ENCODE measurements at regions of chr4 and their contacts with region 1.

Region 1: DNA sequence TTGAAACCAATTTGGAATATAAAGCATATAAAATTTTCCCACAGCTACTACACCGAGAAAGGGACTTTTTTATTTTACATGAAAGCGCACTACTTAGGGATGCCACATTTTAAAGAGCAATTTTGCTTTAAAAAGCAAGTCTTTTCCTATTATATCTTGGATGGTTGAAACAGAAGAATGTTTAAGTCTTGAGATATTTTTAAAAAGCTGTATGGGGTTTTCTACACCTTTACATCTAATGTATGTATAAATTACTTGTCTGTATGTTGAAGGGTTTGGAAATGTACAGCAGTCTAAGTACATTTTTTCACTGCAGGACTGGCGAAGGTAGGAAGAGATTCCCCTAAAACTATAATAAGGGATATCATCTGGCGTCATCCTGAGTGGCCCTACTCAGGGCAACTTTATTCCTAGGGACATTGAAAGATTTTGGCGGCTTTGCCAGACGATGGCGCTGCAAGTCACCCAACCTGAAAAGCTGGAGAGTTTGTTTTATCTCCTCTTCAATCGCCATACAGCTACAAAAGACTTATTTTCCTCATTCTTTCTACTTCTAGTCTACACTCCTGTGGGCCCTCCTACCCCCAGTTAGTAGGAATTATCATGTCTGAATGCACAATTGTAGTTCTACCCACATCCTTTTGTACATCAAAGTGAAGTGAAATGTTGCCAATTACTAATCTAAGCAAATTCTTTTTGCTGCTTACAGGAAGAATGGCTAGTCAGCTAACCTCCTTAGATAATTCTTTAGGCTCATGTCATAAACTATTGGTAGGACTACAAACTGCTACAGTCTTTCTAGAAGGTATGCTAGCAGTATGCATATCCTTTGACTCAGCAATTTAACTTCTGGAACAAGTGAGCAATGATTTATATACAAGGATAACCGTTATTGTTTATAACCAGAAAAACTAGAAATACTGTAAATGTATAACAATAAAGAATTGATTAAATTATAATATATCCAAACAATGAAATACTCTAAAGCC is 782 bp upstream of the NEK1 start:
- DNase-seq: peak; percentile 51 to 88 (median 77)
- ATAC-seq: peak; percentile 43
- H3K4me3 ChIP-seq: peak overlapping the region; percentile 70 to 95
- H3K4me3 Mint-ChIP-seq: peak overlapping the region; percentile 97
- H3K27ac ChIP-seq: peak overlapping the region; percentile 97 to 100
- H3K27ac Mint-ChIP-seq: peak overlapping the region; percentile 99
- H3K4me1 ChIP-seq: peaks cover 22% of the 10 kb centered on the region
- H3K4me1 Mint-ChIP-seq: peaks cover 48% of the 10 kb centered on the region
- H3K27me3 ChIP-seq: no peaks in the 10 kb centered on the region
- H3K27me3 Mint-ChIP-seq: no peaks in the 10 kb centered on the region
- CTCF ChIP-seq: peak; percentile 77

Region 2: GRCh38 chr4:168318266-168318895 is 1294.8 kb before region 1 on chr4 and contains the start of gene DDX60:
- CTCF ChIA-PET with region 1: no interaction called
- POLR2A ChIA-PET with region 1: no interaction called
- intact Hi-C with region 1: loop called in 1 of 2 experiments (anchors 1 kb)
- DNase-seq: peak; percentile 65 to 96 (median 85)
- ATAC-seq: peak; percentile 94
- H3K4me3 ChIP-seq: peak within 1 kb of the TSS; percentile 95 to 100
- H3K4me3 Mint-ChIP-seq: peak within 1 kb of the TSS; percentile 98
- H3K27ac ChIP-seq: peak within 1 kb of the TSS; percentile 99
- H3K27ac Mint-ChIP-seq: peak within 1 kb of the TSS; percentile 99
- H3K4me1 ChIP-seq: peaks cover 24% of the 10 kb centered on the region
- H3K4me1 Mint-ChIP-seq: peaks cover 43% of the 10 kb centered on the region
- H3K27me3 ChIP-seq: no peaks in the 10 kb centered on the region
- H3K27me3 Mint-ChIP-seq: no peaks in the 10 kb centered on the region
- CTCF ChIP-seq: no peak
- total RNA-seq, gene DDX60: 8.2 to 10.1 TPM

Region 3: GRCh38 chr4:169010125-169011023 is 602.8 kb before region 1 on chr4 and contains the start of gene CBR4:
- CTCF ChIA-PET with region 1: no interaction called
- POLR2A ChIA-PET with region 1: no interaction called
- intact Hi-C with region 1: loop called (anchors 1 to 5 kb)
- DNase-seq: peak; percentile 89 to 100 (median 96)
- ATAC-seq: peak; percentile 94
- H3K4me3 ChIP-seq: peak within 1 kb of the TSS; percentile 73 to 96
- H3K4me3 Mint-ChIP-seq: peak within 1 kb of the TSS; percentile 97
- H3K27ac ChIP-seq: peak within 1 kb of the TSS; percentile 85
- H3K27ac Mint-ChIP-seq: peak within 1 kb of the TSS; percentile 96
- H3K4me1 ChIP-seq: peaks cover 23% of the 10 kb centered on the region
- H3K4me1 Mint-ChIP-seq: peaks cover 41% of the 10 kb centered on the region
- H3K27me3 ChIP-seq: no peaks in the 10 kb centered on the region
- H3K27me3 Mint-ChIP-seq: peaks cover 2% of the 10 kb centered on the region
- CTCF ChIP-seq: peak; percentile 55
- total RNA-seq, gene CBR4: 4.6 to 6.0 TPM

Region 4: DNA sequence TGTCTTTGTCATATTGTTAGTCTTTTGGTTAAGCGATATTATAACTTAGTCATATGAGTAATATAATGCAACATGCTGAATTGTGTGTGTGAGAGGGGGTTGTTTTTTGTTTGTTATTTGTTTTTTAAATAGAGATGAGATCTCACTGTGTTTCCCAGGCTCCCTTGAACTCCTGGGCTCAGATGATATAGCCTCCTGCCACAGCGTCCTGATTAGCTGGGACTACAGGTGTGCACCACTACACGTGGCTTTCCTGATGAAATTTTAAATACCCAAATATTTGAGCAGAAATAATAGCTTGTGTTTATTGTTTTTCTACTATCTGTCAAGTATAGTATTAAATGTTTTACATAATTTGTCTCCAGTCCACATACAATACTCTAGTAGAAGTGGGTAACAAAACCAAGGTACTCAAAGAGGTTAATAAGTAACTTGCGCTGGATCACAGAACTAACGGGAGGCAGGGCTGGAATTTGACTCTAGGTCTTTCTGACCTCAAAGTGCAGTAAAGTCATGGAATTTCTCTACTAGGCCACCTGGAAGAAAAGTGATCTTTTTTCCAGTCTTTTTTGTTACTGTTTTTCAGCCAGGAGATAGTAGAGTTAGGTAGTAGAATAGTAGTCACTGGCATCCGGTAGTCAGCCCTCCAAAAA is 55.0 kb after region 1 on chr4:
- CTCF ChIA-PET with region 1: no interaction called
- POLR2A ChIA-PET with region 1: interaction called, 10 read pairs
- intact Hi-C with region 1: no loop called
- DNase-seq: no peak
- ATAC-seq: no peak
- H3K4me3 ChIP-seq: no peak overlapping the region
- H3K4me3 Mint-ChIP-seq: no peak overlapping the region
- H3K27ac ChIP-seq: no peak overlapping the region
- H3K27ac Mint-ChIP-seq: no peak overlapping the region
- H3K4me1 ChIP-seq: peaks cover 10% of the 10 kb centered on the region
- H3K4me1 Mint-ChIP-seq: peaks cover 27% of the 10 kb centered on the region
- H3K27me3 ChIP-seq: no peaks in the 10 kb centered on the region
- H3K27me3 Mint-ChIP-seq: no peaks in the 10 kb centered on the region
- CTCF ChIP-seq: no peak

Region 5: GRCh38 chr4:169723207-169723965 is 110.2 kb after region 1 on chr4:
- CTCF ChIA-PET with region 1: interaction called, 3 read pairs
- POLR2A ChIA-PET with region 1: interaction called, 3 read pairs
- intact Hi-C with region 1: loop called (anchors 2 kb)
- DNase-seq: peak in 4 of 9 experiments; percentile 7 to 43 (median 28)
- ATAC-seq: no peak
- H3K4me3 ChIP-seq: no peak overlapping the region
- H3K4me3 Mint-ChIP-seq: no peak overlapping the region
- H3K27ac ChIP-seq: no peak overlapping the region
- H3K27ac Mint-ChIP-seq: peak overlapping the region; percentile 52
- H3K4me1 ChIP-seq: no peaks in the 10 kb centered on the region
- H3K4me1 Mint-ChIP-seq: peaks cover 2% of the 10 kb centered on the region
- H3K27me3 ChIP-seq: no peaks in the 10 kb centered on the region
- H3K27me3 Mint-ChIP-seq: no peaks in the 10 kb centered on the region
- CTCF ChIP-seq: peak; percentile 16

Region 6: DNA sequence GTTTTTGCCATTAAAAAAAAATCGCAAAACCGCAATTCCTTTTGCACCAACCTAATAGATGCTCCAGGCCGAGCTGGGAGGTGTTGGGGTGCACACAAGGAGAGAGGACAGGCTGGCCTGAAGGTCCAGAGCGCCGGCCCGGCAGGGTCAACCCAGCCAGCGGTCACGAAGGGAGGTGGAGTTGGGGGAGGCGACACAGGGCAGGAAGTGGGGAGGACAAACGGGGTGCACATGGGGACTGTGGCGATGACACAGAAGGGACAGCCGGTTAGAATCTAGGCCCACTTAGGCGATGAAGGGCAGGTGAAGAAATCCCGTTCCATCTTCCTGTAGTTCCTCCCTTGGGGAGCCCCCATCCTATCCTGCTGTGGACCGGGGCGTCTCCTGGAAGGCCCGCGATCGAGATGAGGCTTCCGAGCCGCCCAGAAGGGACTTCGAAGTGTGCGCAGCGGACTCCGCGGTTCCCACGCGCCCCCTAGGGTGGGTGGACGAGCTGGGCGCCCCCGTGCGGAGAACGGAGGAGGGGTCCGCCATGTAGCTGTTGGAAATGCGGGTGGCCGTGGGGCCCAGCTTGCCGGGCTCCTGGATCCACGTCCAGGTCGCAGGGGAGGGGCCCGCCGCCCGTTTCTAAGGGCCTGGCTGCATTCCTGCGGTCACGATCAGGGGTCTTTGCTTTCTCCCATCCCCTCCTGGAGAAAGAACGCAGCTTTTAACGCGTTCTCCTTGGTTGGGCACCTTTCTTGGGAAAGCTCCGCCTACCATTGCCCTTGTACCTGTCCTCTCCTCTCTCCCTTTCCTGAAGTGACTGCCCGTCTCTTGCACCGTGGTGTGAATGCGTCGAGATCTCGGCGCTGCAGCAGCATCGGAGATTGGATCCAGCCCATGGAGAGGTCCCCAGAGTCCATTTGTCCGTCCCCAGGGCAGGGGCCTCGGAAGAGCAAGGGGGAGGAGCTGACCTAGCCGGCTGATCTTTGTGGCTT is 161.6 kb after region 1 on chr4:
- CTCF ChIA-PET with region 1: interaction called, 10 read pairs
- POLR2A ChIA-PET with region 1: no interaction called
- intact Hi-C with region 1: no loop called
- DNase-seq: peak in 8 of 9 experiments; percentile 7 to 64 (median 42)
- ATAC-seq: peak; percentile 57
- H3K4me3 ChIP-seq: peak overlapping the region in 1 of 2 experiments; percentile 28
- H3K4me3 Mint-ChIP-seq: peak overlapping the region; percentile 26
- H3K27ac ChIP-seq: no peak overlapping the region
- H3K27ac Mint-ChIP-seq: no peak overlapping the region
- H3K4me1 ChIP-seq: peaks cover 5% of the 10 kb centered on the region
- H3K4me1 Mint-ChIP-seq: peaks cover 5% of the 10 kb centered on the region
- H3K27me3 ChIP-seq: peaks cover 0 to 4% of the 10 kb centered on the region in 2 experiments
- H3K27me3 Mint-ChIP-seq: peaks cover 27% of the 10 kb centered on the region
- CTCF ChIP-seq: no peak

Region 7: DNA sequence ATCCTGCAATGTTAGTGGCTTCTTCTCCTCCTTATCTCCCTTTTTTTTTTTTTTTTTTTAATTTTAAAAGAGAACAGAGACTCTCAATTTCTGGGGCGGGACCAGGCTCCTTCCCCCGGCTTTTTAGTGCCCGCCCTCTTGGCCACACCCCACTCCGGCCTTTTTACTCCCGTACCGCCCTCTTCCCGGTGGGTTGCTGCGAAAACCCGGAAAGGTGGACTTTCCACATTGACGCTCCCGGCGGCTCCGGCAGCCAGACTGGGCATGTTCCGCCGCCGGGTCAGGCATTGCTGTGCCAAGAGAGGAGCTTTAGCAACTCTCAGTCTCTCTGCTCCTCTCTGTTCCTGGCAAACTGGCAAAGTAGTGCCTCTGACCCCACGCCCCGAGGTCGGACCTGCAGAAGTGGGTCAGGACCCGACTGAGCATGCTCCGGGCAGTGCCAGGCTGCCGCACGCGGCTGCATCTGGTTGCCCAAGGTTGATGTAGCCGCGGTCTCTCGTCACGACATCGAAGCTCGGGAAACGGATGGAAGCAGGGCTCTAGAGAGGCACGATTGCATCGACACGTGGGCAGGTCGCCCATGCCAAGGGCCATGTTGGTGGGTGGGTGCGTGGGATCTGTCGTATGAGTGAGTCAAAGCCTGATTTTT is 414.1 kb after region 1 on chr4:
- CTCF ChIA-PET with region 1: no interaction called
- POLR2A ChIA-PET with region 1: interaction called, 3 read pairs
- intact Hi-C with region 1: loop called (anchors 1 to 5 kb)
- DNase-seq: peak; percentile 77 to 94 (median 87)
- ATAC-seq: peak; percentile 76
- H3K4me3 ChIP-seq: peak overlapping the region; percentile 84
- H3K4me3 Mint-ChIP-seq: peak overlapping the region; percentile 93
- H3K27ac ChIP-seq: peak overlapping the region; percentile 6 to 65
- H3K27ac Mint-ChIP-seq: peak overlapping the region; percentile 60
- H3K4me1 ChIP-seq: peaks cover 5% of the 10 kb centered on the region
- H3K4me1 Mint-ChIP-seq: peaks cover 17% of the 10 kb centered on the region
- H3K27me3 ChIP-seq: peaks cover 0 to 5% of the 10 kb centered on the region in 2 experiments
- H3K27me3 Mint-ChIP-seq: peaks cover 7% of the 10 kb centered on the region
- CTCF ChIP-seq: no peak